HCT116 (cell line): ENCODE measurements at regions of chr3 and their contacts with region 1.

Region 1: GRCh38 chr3:14261229-14261628 is 82.6 kb downstream of the LSM3 start:
- DNase-seq: peak; percentile 68
- ATAC-seq: peak; percentile 90
- H3K4me3 ChIP-seq: no peak overlapping the region
- H3K27ac ChIP-seq: no peak overlapping the region
- H3K4me1 ChIP-seq: peaks cover 0 to 9% of the 10 kb centered on the region in 2 experiments; a peak in 1 of 4 replicates
- H3K27me3 ChIP-seq: peaks cover 6% of the 10 kb centered on the region; the same call in 1 of the 2 replicates
- CTCF ChIP-seq: peak; percentile 97 to 99 (median 97)
- POLR2A ChIP-seq: no peak
- RAD21 ChIP-seq: peak; percentile 98

Region 2: DNA sequence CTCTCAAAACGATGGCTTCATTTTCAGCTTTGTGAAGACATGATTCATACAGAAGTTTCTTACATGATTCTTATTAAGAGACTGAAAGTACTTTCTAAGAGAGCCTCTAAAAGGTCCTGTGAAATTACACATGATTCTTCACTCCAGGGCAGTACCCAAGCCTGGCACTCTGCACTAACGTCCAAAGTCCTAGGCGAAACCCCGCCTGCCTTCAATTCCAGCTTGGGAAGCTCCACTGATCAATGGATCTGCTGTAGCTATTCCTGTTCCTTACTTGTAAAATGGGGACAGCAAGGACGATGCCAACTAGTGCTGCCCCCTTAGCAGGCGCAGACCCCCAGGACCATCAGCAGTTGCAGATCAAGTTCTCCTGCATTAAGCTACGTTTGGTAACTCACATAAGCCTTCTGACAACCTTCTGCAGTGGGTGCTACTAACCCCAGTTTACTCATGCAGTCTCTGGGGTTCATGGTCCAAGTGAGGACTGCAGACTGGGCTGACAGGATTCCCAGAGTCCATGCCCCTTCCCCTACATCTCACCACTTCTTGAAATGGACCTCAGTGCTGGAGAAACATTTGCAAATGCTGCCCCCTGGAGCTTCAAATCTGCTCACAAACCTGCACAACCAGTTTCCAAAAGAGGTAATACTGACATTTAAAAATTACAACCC is 147.1 kb before region 1 on chr3:
- CTCF ChIA-PET with region 1: no interaction called
- POLR2A ChIA-PET with region 1: no interaction called
- RAD21 ChIA-PET with region 1: no interaction called
- intact Hi-C with region 1: no loop called
- DNase-seq: no peak
- ATAC-seq: 0 out of 2 replicates have a peak, but pooled peaks have one; percentile 36
- H3K4me3 ChIP-seq: no peak overlapping the region
- H3K27ac ChIP-seq: no peak overlapping the region
- H3K4me1 ChIP-seq: no peaks in the 10 kb centered on the region
- H3K27me3 ChIP-seq: no peaks in the 10 kb centered on the region
- CTCF ChIP-seq: peak; percentile 28 to 48 (median 47); a peak in 4 of 6 replicates
- POLR2A ChIP-seq: no peak
- RAD21 ChIP-seq: peak; percentile 65

Region 3: DNA sequence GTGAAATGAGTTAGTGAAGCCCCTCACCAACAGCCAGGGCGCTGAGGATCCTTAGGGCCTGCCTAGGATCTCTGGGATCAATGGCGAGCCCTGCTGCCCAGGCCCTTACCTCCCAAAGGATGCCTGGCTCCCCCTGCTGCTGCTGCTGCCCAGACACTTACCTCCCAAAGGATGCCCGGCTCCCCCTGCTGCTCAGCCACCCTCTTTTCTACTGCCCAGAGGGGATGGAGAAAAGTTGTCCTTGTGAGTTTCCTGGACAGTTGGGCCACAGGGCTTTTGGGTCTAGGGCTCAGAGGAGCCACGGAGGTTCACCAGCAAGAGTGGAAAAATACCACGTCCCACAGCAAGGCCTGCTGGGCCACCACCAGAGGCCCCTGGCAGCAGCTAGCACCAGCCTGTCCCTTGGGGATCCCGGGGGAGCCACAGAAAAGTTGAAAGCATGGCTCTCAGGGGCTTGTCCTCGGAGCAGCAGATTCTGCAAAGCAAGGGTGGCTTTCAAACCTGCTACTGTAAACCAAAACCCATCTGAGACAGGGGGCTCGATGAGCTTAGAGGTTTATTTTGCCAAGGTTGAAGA is 200.6 kb after region 1 on chr3:
- CTCF ChIA-PET with region 1: interaction called, 8 read pairs
- POLR2A ChIA-PET with region 1: no interaction called
- RAD21 ChIA-PET with region 1: no interaction called
- intact Hi-C with region 1: loop called (anchors 1 kb)
- DNase-seq: peak; percentile 32
- ATAC-seq: peak; percentile 89
- H3K4me3 ChIP-seq: no peak overlapping the region
- H3K27ac ChIP-seq: no peak overlapping the region
- H3K4me1 ChIP-seq: no peaks in the 10 kb centered on the region
- H3K27me3 ChIP-seq: no peaks in the 10 kb centered on the region
- CTCF ChIP-seq: peak; percentile 69 to 99 (median 81)
- POLR2A ChIP-seq: no peak
- RAD21 ChIP-seq: peak; percentile 96

Region 4: DNA sequence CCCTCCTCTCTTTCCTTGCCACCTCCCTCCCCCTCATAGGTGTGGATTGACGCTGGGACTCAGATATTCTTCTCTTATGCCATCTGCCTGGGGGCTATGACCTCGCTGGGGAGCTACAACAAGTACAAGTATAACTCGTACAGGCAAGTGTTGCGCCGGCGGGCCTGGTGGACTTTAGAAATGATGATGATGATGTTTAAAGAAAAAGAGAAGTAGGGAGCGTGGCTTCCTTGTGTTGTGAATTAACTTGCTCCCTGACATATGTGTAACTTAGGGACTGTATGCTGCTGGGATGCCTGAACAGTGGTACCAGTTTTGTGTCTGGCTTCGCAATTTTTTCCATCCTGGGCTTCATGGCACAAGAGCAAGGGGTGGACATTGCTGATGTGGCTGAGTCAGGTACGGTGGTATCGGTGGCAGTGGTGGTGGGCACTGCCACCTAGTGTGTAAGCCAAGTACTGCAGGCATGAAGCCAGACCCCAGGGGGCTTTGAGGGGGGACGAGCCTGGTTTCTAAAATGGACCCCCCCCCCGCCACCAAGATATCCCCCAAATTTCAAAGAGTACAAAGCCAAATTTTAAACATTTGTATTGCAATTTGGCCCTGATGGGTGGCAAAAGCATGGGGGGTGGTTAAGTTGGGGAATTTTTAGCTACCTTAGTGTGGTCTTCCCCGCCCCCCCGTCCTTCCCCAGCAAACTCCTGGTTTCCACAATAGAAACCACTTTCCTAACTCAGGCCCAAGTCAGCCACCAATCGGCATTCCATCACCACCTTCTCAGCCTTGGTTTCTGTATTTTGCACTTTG is 206.8 kb after region 1 on chr3:
- CTCF ChIA-PET with region 1: interaction called, 8 read pairs
- POLR2A ChIA-PET with region 1: no interaction called
- RAD21 ChIA-PET with region 1: no interaction called
- intact Hi-C with region 1: loop called (anchors 1 kb)
- DNase-seq: no peak
- ATAC-seq: peak; percentile 39
- H3K4me3 ChIP-seq: no peak overlapping the region
- H3K27ac ChIP-seq: no peak overlapping the region
- H3K4me1 ChIP-seq: peaks cover 13 to 19% of the 10 kb centered on the region in 2 experiments
- H3K27me3 ChIP-seq: no peaks in the 10 kb centered on the region
- CTCF ChIP-seq: peak; percentile 63 to 90 (median 89); a peak in 5 of 6 replicates
- POLR2A ChIP-seq: no peak
- RAD21 ChIP-seq: peak; percentile 87

Region 5: GRCh38 chr3:14548321-14548729 is 287.1 kb after region 1 on chr3:
- CTCF ChIA-PET with region 1: interaction called, 3 read pairs
- POLR2A ChIA-PET with region 1: no interaction called
- RAD21 ChIA-PET with region 1: no interaction called
- intact Hi-C with region 1: loop called (anchors 1 kb)
- DNase-seq: peak; percentile 39
- ATAC-seq: peak; percentile 96
- H3K4me3 ChIP-seq: no peak overlapping the region
- H3K27ac ChIP-seq: no peak overlapping the region
- H3K4me1 ChIP-seq: peaks cover 0 to 13% of the 10 kb centered on the region in 2 experiments; a peak in 2 of 4 replicates
- H3K27me3 ChIP-seq: no peaks in the 10 kb centered on the region
- CTCF ChIP-seq: peak; percentile 74 to 86 (median 78)
- POLR2A ChIP-seq: no peak
- RAD21 ChIP-seq: peak; percentile 85

Region 6: GRCh38 chr3:15253023-15253697 is 991.9 kb after region 1 on chr3:
- CTCF ChIA-PET with region 1: no interaction called
- POLR2A ChIA-PET with region 1: no interaction called
- RAD21 ChIA-PET with region 1: no interaction called
- intact Hi-C with region 1: no loop called
- DNase-seq: no peak
- ATAC-seq: no peak
- H3K4me3 ChIP-seq: no peak overlapping the region
- H3K27ac ChIP-seq: no peak overlapping the region
- H3K4me1 ChIP-seq: no peaks in the 10 kb centered on the region
- H3K27me3 ChIP-seq: no peaks in the 10 kb centered on the region
- CTCF ChIP-seq: no peak
- POLR2A ChIP-seq: no peak
- RAD21 ChIP-seq: no peak